ENCODE measurements at regions of chr18 and their contacts with region 1.

Region 1: GRCh38 chr18:55234366-55235093 is 275.3 kb upstream of the CCDC68 start:
- DNase-seq: peak; percentile 63 to 87
- H3K4me3 ChIP-seq: no peak overlapping the region
- H3K27ac ChIP-seq: no peak overlapping the region
- H3K4me1 ChIP-seq: no peaks in the 10 kb centered on the region
- H3K27me3 ChIP-seq: peaks cover 0 to 1% (median 0%) of the 10 kb centered on the region in 4 experiments; a peak in 1 of 7 replicates
- CTCF ChIP-seq: peak; percentile 73 to 91 (median 78)
- EP300 ChIP-seq: no peak
- POLR2A ChIP-seq: no peak
- RAD21 ChIP-seq: peak; percentile 96 to 97

Region 2: DNA sequence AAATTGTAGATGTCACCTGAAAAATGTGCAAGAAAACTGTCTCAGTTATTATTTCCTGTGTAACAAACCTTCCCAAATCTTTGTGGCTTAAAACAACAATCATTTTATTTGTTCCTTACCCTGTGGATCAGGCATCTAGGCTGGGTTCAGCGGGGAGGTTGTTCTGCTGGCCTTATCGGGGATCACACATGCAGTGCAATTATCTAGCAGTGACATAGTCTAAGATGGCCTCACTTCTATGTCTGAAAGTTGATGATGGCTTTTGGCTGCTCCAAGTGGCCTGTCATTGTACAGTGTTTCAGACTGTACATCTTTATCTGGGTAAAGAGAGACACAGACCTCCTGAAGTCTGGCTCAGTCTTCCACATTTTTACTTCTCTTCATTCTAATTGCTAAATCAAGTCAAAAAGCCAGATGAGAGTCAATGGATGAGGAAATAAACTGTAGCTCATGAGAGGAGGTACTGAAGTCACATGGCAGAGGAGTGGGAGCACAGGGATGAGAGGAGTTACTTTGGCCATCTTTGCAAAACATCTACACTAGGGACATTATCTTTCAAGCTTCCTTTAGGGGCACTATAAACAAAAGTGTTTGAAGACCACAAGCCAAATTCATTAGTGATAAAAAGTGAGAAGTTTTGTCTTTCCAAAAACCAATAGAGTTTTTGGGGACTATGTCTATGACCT is 32.2 kb before region 1 on chr18:
- CTCF ChIA-PET with region 1: no interaction called
- POLR2A ChIA-PET with region 1: no interaction called
- DNase-seq: no peak
- H3K4me3 ChIP-seq: no peak overlapping the region
- H3K27ac ChIP-seq: no peak overlapping the region
- H3K4me1 ChIP-seq: no peaks in the 10 kb centered on the region
- H3K27me3 ChIP-seq: peaks cover 0 to 1% (median 0%) of the 10 kb centered on the region in 4 experiments; a peak in 1 of 7 replicates
- CTCF ChIP-seq: no peak
- EP300 ChIP-seq: no peak
- POLR2A ChIP-seq: no peak
- RAD21 ChIP-seq: no peak

Region 3: GRCh38 chr18:55214969-55215368 is 19.6 kb before region 1 on chr18:
- CTCF ChIA-PET with region 1: interaction called, 13 read pairs
- POLR2A ChIA-PET with region 1: interaction called, 4 read pairs
- DNase-seq: no peak
- H3K4me3 ChIP-seq: no peak overlapping the region
- H3K27ac ChIP-seq: no peak overlapping the region
- H3K4me1 ChIP-seq: peaks cover 0 to 16% (median 6%) of the 10 kb centered on the region in 4 experiments; a peak in 6 of 7 replicates
- H3K27me3 ChIP-seq: no peaks in the 10 kb centered on the region
- CTCF ChIP-seq: no peak
- EP300 ChIP-seq: no peak
- POLR2A ChIP-seq: no peak
- RAD21 ChIP-seq: no peak

Region 4: GRCh38 chr18:55251254-55251971 is 16.9 kb after region 1 on chr18:
- CTCF ChIA-PET with region 1: interaction called, 22 read pairs
- POLR2A ChIA-PET with region 1: no interaction called
- DNase-seq: no peak
- H3K4me3 ChIP-seq: no peak overlapping the region
- H3K27ac ChIP-seq: no peak overlapping the region
- H3K4me1 ChIP-seq: peaks cover 0 to 3% (median 0%) of the 10 kb centered on the region in 4 experiments; a peak in 1 of 7 replicates
- H3K27me3 ChIP-seq: no peaks in the 10 kb centered on the region
- CTCF ChIP-seq: no peak
- EP300 ChIP-seq: no peak
- POLR2A ChIP-seq: no peak
- RAD21 ChIP-seq: no peak

Region 5: DNA sequence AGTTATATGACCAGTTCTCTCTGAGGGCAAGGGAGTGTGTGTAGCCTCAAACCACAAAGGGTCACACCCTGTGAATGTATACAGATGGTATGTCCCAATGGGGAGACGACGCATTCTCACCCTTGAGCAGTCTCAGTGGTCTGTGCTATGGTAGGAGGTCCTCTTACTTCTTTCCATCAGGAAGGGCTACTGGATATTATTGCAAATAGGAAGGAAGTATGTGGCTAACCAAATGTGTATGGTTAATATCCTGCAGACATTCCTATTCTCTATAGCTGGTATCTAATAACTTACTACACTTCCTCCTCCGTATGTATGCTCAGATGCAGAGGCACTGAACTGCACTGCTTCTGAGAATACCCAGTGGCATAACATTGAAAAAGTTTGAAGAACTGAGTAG is 31.5 kb after region 1 on chr18:
- CTCF ChIA-PET with region 1: interaction called, 17 read pairs
- POLR2A ChIA-PET with region 1: no interaction called
- DNase-seq: no peak
- H3K4me3 ChIP-seq: no peak overlapping the region
- H3K27ac ChIP-seq: no peak overlapping the region
- H3K4me1 ChIP-seq: peaks cover 0 to 7% (median 5%) of the 10 kb centered on the region in 4 experiments; a peak in 4 of 7 replicates
- H3K27me3 ChIP-seq: no peaks in the 10 kb centered on the region
- CTCF ChIP-seq: no peak
- EP300 ChIP-seq: no peak
- POLR2A ChIP-seq: no peak
- RAD21 ChIP-seq: no peak

Region 6: DNA sequence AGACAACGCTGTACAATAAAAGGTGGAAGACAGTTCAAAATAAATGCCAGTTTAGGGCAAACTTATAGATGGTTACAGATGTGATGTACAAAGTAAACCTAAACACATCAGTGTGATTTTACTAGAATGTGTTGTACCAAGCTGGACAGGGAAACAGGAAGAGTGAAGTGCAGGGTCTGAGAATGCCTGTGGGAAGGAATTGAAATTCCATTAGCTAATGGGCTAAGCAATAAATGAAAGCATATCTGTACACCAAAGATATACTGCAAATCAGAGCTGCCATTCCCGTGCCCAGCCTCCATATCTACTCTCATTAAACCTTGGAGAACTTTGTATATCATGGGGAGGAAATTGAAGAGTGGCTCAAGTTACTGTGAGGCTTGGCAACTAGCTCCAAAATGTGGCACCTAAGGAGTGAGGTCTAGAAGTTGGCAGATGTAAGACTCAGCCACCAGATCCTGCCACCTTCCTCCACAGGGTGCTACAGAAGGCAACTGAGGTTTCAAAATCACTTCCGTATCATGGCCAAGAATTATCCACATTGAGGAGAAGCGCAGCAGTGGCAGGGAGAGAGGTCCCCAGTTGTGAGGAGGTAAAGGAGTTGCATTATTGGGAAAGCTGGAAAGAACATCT is 75.6 kb after region 1 on chr18:
- CTCF ChIA-PET with region 1: interaction called, 11 read pairs
- POLR2A ChIA-PET with region 1: no interaction called
- DNase-seq: no peak
- H3K4me3 ChIP-seq: no peak overlapping the region
- H3K27ac ChIP-seq: no peak overlapping the region
- H3K4me1 ChIP-seq: peaks cover 0 to 12% (median 5%) of the 10 kb centered on the region in 4 experiments; a peak in 4 of 7 replicates
- H3K27me3 ChIP-seq: no peaks in the 10 kb centered on the region
- CTCF ChIP-seq: no peak
- EP300 ChIP-seq: no peak
- POLR2A ChIP-seq: no peak
- RAD21 ChIP-seq: no peak

Measured in H1 (cell line).